Prostate gland (tissue), 2 donors: ENCODE measurements at regions of chr14 and their contacts with region 1.

Region 1: GRCh38 chr14:99884834-99885648 is 91.8 kb downstream of the EML1 start:
- DNase-seq: peak; percentile 34
- H3K4me3 ChIP-seq: no peak overlapping the region
- H3K27ac ChIP-seq: no peak overlapping the region
- H3K4me1 ChIP-seq: no peaks in the 10 kb centered on the region
- H3K27me3 ChIP-seq: no peaks in the 10 kb centered on the region
- CTCF ChIP-seq: peak; percentile 48 to 85 (median 76)
- POLR2A ChIP-seq: no peak

Region 2: GRCh38 chr14:99683619-99684355 is 201.3 kb before region 1 on chr14 and contains the start of gene CYP46A1:
- intact Hi-C with region 1: loop called (anchors 5 kb)
- DNase-seq: peak; percentile 100
- H3K4me3 ChIP-seq: peak within 1 kb of the TSS; percentile 62 to 78
- H3K27ac ChIP-seq: peak within 1 kb of the TSS; percentile 44 to 68
- H3K4me1 ChIP-seq: peaks cover 7% of the 10 kb centered on the region
- H3K27me3 ChIP-seq: no peaks in the 10 kb centered on the region
- CTCF ChIP-seq: peak in 2 of 4 experiments; percentile 22 to 43
- POLR2A ChIP-seq: no peak
- total RNA-seq, gene CYP46A1: 0.46 to 6.5 TPM

Region 3: GRCh38 chr14:99729991-99730868 is 154.8 kb before region 1 on chr14:
- intact Hi-C with region 1: loop called (anchors 1 kb)
- DNase-seq: peak; percentile 43
- H3K4me3 ChIP-seq: peak overlapping the region; percentile 35 to 47
- H3K27ac ChIP-seq: no peak overlapping the region
- H3K4me1 ChIP-seq: no peaks in the 10 kb centered on the region
- H3K27me3 ChIP-seq: no peaks in the 10 kb centered on the region
- CTCF ChIP-seq: peak; percentile 71 to 88 (median 86)
- POLR2A ChIP-seq: no peak